ENCODE measurements at regions of chr7 and their contacts with region 1.

Region 1: GRCh38 chr7:82234457-82235049 is 209.0 kb downstream of the CACNA2D1 start:
- DNase-seq: peak; percentile 60
- ATAC-seq: no peak
- H3K4me3 ChIP-seq: no peak overlapping the region
- H3K27ac ChIP-seq: no peak overlapping the region
- H3K4me1 ChIP-seq: no peaks in the 10 kb centered on the region
- H3K27me3 ChIP-seq: peaks cover 37% of the 10 kb centered on the region
- CTCF ChIP-seq: peak; percentile 77

Region 2: GRCh38 chr7:82122275-82122674 is 112.3 kb before region 1 on chr7:
- CTCF ChIA-PET with region 1: no interaction called
- POLR2A ChIA-PET with region 1: no interaction called
- intact Hi-C with region 1: no loop called
- DNase-seq: no peak
- ATAC-seq: no peak
- H3K4me3 ChIP-seq: no peak overlapping the region
- H3K27ac ChIP-seq: no peak overlapping the region
- H3K4me1 ChIP-seq: no peaks in the 10 kb centered on the region
- H3K27me3 ChIP-seq: no peaks in the 10 kb centered on the region
- CTCF ChIP-seq: no peak

Region 3: GRCh38 chr7:82362129-82362706 is 127.7 kb after region 1 on chr7:
- CTCF ChIA-PET with region 1: interaction called, 5 read pairs
- POLR2A ChIA-PET with region 1: no interaction called
- intact Hi-C with region 1: loop called (anchors 2 kb)
- DNase-seq: no peak
- ATAC-seq: no peak
- H3K4me3 ChIP-seq: no peak overlapping the region
- H3K27ac ChIP-seq: no peak overlapping the region
- H3K4me1 ChIP-seq: no peaks in the 10 kb centered on the region
- H3K27me3 ChIP-seq: peaks cover 18% of the 10 kb centered on the region
- CTCF ChIP-seq: no peak

Region 4: DNA sequence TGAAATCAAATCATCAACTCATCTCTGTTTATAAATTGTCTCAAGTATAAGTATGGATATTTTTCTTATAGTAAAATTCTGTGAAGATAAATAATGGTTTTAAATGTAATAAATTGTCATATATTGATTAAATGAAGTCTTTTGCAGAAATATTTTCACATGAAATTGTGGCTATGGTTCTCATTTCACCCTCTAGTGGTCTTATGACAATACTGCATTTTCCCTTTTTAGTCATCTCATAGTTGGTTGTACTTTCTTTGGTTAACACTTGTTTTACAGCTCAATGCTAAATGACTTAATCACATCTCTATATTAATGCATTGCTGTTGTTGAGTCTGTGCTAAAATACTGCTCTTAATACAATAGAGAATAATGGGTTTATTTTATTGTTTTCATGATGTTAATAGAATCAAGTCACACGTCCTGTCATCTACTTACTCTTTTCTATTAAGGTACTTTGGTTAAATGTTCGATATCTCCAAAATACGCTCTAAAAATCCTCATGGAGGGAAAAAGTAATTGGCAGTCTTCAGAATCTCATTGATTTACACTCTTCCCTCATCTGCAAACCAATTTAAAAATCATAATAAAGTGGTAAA is 247.0 kb after region 1 on chr7:
- CTCF ChIA-PET with region 1: no interaction called
- POLR2A ChIA-PET with region 1: no interaction called
- intact Hi-C with region 1: loop called (anchors 1 kb)
- DNase-seq: peak; percentile 43
- ATAC-seq: no peak
- H3K4me3 ChIP-seq: no peak overlapping the region
- H3K27ac ChIP-seq: no peak overlapping the region
- H3K4me1 ChIP-seq: no peaks in the 10 kb centered on the region
- H3K27me3 ChIP-seq: peaks cover 7% of the 10 kb centered on the region
- CTCF ChIP-seq: peak; percentile 69

Region 5: GRCh38 chr7:82605247-82605872 is 370.8 kb after region 1 on chr7:
- CTCF ChIA-PET with region 1: interaction called, 6 read pairs
- POLR2A ChIA-PET with region 1: no interaction called
- intact Hi-C with region 1: loop called (anchors 5 kb)
- DNase-seq: peak; percentile 59
- ATAC-seq: no peak
- H3K4me3 ChIP-seq: no peak overlapping the region
- H3K27ac ChIP-seq: no peak overlapping the region
- H3K4me1 ChIP-seq: no peaks in the 10 kb centered on the region
- H3K27me3 ChIP-seq: no peaks in the 10 kb centered on the region; the same call in 1 of the 2 replicates
- CTCF ChIP-seq: peak; percentile 82